Posterior cingulate gyrus (tissue), 11 donors: ENCODE measurements at regions of chr5 and their contacts with region 1.

Region 1: GRCh38 chr5:155147222-155147621 is 133.7 kb downstream of the KIF4B start:
- DNase-seq: no peak

Region 2: DNA sequence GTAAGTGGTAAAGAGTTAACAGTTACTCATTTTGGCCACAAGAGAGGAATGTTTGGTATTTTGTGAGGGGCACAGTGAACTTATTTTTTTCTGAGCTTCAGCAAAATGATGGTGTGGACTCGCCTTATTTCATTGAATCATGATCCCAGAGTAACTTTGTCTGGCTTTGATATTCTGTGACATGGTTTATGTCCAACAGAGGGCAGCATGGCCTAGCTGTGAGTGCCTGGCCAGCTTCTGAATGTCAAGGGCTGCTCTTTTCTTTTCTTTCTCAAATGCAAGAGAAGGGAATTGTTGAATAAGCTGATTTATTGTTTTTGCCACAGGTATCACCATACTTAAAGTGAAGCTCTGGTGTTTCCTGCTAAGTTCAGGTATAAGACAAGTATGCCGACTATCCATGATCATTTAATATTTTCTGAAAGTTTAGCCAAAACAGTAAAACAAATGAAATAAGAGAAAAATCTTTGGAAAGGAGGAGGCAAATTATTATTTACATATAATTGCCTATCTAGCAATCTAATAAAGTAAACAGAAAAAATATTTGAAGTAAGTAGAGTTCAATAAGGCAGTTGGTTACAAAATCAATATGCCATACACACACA is 174.6 kb before region 1 on chr5:
- intact Hi-C with region 1: loop called (anchors 5 kb)
- DNase-seq: peak in 6 of 10 donors; percentile 26 to 77 (median 48)